ENCODE measurements at regions of chr14 and their contacts with region 1.

Region 1: GRCh38 chr14:24678801-24679247 is 44.8 kb upstream of the GZMB start:
- DNase-seq: peak; percentile 90
- H3K4me3 ChIP-seq: peak overlapping the region; percentile 31
- H3K27ac ChIP-seq: no peak overlapping the region
- H3K4me1 ChIP-seq: peaks cover 12% of the 10 kb centered on the region
- CTCF ChIP-seq: peak; percentile 100

Region 2: DNA sequence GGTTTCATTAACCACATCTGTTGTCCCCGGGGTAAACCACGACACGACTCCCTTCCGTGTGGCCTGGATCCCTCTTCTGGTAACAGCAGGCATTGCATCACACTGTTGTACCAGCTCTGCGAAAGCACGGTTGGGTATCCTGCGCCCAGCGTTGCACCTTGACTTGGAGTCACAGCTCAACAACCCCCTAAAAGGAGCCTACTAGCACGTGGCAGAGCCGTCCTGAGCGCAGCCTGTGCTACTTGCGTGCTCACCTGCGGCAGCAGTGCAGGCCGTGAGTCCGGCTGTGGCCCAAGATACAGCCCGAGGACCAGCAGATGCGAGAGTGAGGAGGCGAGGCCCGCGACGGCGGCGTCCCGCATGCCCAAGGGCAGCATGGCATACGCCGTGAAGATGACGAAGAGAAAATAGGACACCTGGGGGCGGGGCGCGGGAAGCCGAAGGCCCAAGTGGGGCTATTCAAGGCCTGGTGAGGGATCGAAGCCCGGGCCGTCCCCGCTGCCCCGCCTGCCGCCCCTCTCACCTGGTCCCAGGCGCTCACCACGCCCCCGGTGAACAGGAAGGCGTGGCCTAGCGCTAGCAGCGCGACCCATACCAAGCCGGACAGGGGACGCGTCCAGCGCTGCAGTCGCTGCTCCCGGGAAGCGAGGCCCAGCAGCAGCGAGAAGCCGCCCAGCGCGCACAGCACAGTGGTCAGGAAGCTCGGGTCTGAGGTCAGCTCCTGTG is 346.4 kb before region 1 on chr14:
- CTCF ChIA-PET with region 1: no interaction called
- POLR2A ChIA-PET with region 1: no interaction called
- intact Hi-C with region 1: loop called (anchors 10 kb)
- DNase-seq: peak; percentile 92
- H3K4me3 ChIP-seq: peak overlapping the region; percentile 26
- H3K27ac ChIP-seq: no peak overlapping the region
- H3K4me1 ChIP-seq: peaks cover 26% of the 10 kb centered on the region
- CTCF ChIP-seq: peak; percentile 84

Region 3: GRCh38 chr14:24481622-24482324 is 197.1 kb before region 1 on chr14:
- CTCF ChIA-PET with region 1: no interaction called
- POLR2A ChIA-PET with region 1: no interaction called
- intact Hi-C with region 1: loop called (anchors 1 kb)
- DNase-seq: peak; percentile 32
- H3K4me3 ChIP-seq: no peak overlapping the region
- H3K27ac ChIP-seq: no peak overlapping the region
- H3K4me1 ChIP-seq: no peaks in the 10 kb centered on the region
- CTCF ChIP-seq: peak; percentile 78

Region 4: DNA sequence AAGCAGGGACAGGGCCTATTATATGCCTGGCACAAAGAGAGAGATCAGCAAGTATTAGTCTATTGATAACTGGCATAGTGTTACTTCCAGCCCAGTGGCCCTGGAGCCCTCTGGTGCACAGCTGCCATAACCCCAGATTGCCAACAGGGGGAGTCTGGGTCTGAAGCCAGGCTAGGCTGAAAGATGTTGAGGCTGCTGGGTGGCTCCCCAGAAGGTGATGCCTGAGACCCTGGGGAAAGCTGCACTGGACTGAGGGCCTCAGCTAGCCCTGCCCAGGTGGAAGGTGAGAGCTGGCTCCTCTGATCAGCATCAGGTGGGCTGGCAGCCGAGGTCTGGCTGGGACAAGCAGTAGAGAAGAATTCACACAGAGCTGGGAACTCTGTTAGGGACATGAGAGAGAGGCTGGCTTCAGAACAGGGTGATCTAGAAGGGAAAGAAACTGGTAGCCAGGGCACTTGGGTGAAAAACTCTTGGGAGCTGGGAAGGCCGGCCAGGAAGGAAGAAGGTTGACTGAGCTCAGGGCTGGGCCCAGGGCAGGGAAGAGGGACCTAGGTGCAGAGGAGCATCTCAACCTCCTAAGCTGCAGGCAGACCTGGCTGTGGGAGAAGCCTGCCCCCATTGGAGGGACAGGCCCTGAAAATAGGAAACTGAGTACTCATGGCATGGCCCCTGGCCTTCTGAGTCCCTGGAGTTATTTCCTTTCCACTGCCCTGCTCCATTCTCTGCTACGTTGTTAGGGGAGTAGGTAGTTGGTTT is 73.2 kb before region 1 on chr14:
- CTCF ChIA-PET with region 1: no interaction called
- POLR2A ChIA-PET with region 1: no interaction called
- intact Hi-C with region 1: loop called (anchors 1 kb)
- DNase-seq: peak; percentile 54
- H3K4me3 ChIP-seq: no peak overlapping the region
- H3K27ac ChIP-seq: no peak overlapping the region
- H3K4me1 ChIP-seq: no peaks in the 10 kb centered on the region
- CTCF ChIP-seq: peak; percentile 89

Measured in OCI-LY7 (cell line).